PC-3 (cell line): ENCODE measurements at regions of chr21 and their contacts with region 1.

Region 1: GRCh38 chr21:30580132-30580531 is 10.1 kb downstream of the KRTAP22-2 start:
- DNase-seq: peak; percentile 49
- ATAC-seq: peak; percentile 73
- H3K4me3 ChIP-seq: no peak overlapping the region
- H3K27ac ChIP-seq: no peak overlapping the region
- H3K4me1 ChIP-seq: no peaks in the 10 kb centered on the region
- H3K27me3 ChIP-seq: no peaks in the 10 kb centered on the region
- CTCF ChIP-seq: no peak

Region 2: DNA sequence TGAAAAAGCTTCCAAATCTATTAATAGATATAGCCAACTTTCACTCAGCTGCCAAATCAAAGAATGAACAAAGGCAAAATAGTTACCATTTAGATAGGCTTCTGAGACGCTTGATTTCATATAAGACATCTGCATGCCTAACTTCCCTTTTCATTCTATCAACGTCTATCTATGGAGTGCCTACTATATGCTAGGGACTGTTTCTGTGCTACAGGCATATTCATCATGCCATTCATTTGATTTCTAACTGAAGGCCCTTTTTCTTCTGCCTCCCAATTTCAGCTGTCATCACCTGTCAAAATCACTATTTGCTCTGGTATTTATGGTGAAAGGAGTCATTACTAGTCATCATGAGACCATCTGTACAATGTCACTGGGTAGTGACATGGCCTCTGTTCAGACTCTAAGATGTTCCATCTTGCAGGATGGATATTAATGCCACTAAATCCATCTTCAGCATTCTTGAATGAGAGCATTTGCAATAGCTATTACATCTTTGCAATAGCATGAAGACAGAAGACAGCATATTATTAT is 188.6 kb before region 1 on chr21:
- CTCF ChIA-PET with region 1: no interaction called
- POLR2A ChIA-PET with region 1: no interaction called
- intact Hi-C with region 1: no loop called
- DNase-seq: peak; percentile 40
- ATAC-seq: no peak
- H3K4me3 ChIP-seq: no peak overlapping the region
- H3K27ac ChIP-seq: no peak overlapping the region
- H3K4me1 ChIP-seq: no peaks in the 10 kb centered on the region
- H3K27me3 ChIP-seq: peaks cover 54% of the 10 kb centered on the region; the same call in 1 of the 2 replicates
- CTCF ChIP-seq: no peak

Region 3: DNA sequence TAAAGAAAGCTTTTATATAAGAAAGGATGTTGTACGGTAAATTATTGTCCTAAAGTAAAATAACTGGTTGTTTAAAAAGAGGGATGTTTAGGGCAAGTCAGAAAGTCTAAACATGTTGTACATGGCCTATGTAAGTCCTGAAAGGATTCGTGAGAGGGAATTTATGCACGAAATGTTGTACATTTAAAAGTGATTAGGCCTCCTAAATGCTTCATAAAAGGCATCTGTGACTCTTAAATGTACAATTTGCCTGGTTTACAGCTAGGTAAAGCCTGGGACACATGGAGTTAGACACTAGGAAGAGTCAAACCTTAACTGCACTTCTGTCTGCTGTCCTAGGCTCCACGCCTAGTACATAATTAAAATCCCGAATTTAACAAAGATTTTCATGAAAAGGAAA is 164.1 kb before region 1 on chr21:
- CTCF ChIA-PET with region 1: no interaction called
- POLR2A ChIA-PET with region 1: no interaction called
- intact Hi-C with region 1: no loop called
- DNase-seq: no peak
- ATAC-seq: no peak
- H3K4me3 ChIP-seq: no peak overlapping the region
- H3K27ac ChIP-seq: no peak overlapping the region
- H3K4me1 ChIP-seq: no peaks in the 10 kb centered on the region
- H3K27me3 ChIP-seq: peaks cover 16% of the 10 kb centered on the region; the same call in 1 of the 2 replicates
- CTCF ChIP-seq: no peak

Region 4: DNA sequence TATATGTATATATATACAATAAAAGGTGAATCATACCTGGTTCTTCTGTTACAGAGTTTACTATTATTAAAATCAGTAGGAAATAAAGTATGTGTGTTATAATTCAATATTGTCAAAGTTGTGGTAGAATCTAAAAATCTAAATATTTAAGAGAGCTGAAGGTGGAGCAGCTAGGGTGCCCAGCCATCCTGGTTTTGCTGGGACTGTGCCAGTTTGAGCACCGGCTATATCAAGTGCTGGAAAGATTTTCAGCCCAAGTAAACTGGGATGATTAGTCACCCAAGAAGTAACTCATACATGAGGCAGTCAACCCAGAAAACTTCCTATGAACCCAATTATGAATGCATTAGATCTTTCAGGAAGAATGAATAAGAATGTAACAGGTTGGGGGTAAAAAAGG is 61.3 kb before region 1 on chr21:
- CTCF ChIA-PET with region 1: no interaction called
- POLR2A ChIA-PET with region 1: no interaction called
- intact Hi-C with region 1: loop called (anchors 10 kb)
- DNase-seq: peak; percentile 43
- ATAC-seq: 0 out of 2 replicates have a peak, but pooled peaks have one; percentile 27
- H3K4me3 ChIP-seq: no peak overlapping the region
- H3K27ac ChIP-seq: no peak overlapping the region
- H3K4me1 ChIP-seq: no peaks in the 10 kb centered on the region
- H3K27me3 ChIP-seq: no peaks in the 10 kb centered on the region
- CTCF ChIP-seq: no peak

Region 5: DNA sequence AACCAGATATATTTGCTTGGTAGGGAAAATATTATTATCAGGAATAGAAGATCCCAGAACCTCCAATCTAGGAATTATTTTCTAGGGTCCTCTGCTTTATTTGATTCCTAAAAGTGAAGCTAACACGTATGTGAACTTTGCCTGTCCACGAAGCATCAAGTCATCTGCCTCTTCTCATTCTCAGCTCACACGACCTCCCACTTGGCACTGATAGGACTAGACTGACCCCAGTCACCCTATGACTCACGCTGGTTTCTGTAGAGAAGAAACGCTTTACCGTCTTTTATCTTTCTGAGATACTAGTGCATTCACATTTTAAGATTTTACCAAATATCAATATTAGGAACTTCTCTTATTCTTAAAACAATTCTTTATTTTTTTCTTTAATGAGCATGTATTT is 17.1 kb before region 1 on chr21:
- CTCF ChIA-PET with region 1: no interaction called
- POLR2A ChIA-PET with region 1: no interaction called
- intact Hi-C with region 1: no loop called
- DNase-seq: no peak
- ATAC-seq: no peak
- H3K4me3 ChIP-seq: no peak overlapping the region
- H3K27ac ChIP-seq: no peak overlapping the region
- H3K4me1 ChIP-seq: no peaks in the 10 kb centered on the region
- H3K27me3 ChIP-seq: no peaks in the 10 kb centered on the region
- CTCF ChIP-seq: no peak